ENCODE measurements at regions of chr4 and their contacts with region 1.

Region 1: GRCh38 chr4:169612871-169613859 is 782 bp upstream of the NEK1 start:
- DNase-seq: peak; percentile 51 to 88 (median 77)
- ATAC-seq: peak; percentile 43
- H3K4me3 ChIP-seq: peak overlapping the region; percentile 70 to 95
- H3K4me3 Mint-ChIP-seq: peak overlapping the region; percentile 97
- H3K27ac ChIP-seq: peak overlapping the region; percentile 97 to 100
- H3K27ac Mint-ChIP-seq: peak overlapping the region; percentile 99
- H3K4me1 ChIP-seq: peaks cover 22% of the 10 kb centered on the region
- H3K4me1 Mint-ChIP-seq: peaks cover 48% of the 10 kb centered on the region
- H3K27me3 ChIP-seq: no peaks in the 10 kb centered on the region
- H3K27me3 Mint-ChIP-seq: no peaks in the 10 kb centered on the region
- CTCF ChIP-seq: peak; percentile 77

Region 2: GRCh38 chr4:168480931-168481611 is 1132.1 kb before region 1 on chr4:
- CTCF ChIA-PET with region 1: no interaction called
- POLR2A ChIA-PET with region 1: no interaction called
- intact Hi-C with region 1: loop called in 1 of 2 experiments (anchors 5 kb)
- DNase-seq: peak in 8 of 9 experiments; percentile 16 to 89 (median 56)
- ATAC-seq: peak; percentile 67
- H3K4me3 ChIP-seq: peak overlapping the region; percentile 56 to 93
- H3K4me3 Mint-ChIP-seq: peak overlapping the region; percentile 99
- H3K27ac ChIP-seq: peak overlapping the region; percentile 82 to 96
- H3K27ac Mint-ChIP-seq: peak overlapping the region; percentile 97
- H3K4me1 ChIP-seq: peaks cover 42% of the 10 kb centered on the region
- H3K4me1 Mint-ChIP-seq: peaks cover 66% of the 10 kb centered on the region
- H3K27me3 ChIP-seq: no peaks in the 10 kb centered on the region
- H3K27me3 Mint-ChIP-seq: no peaks in the 10 kb centered on the region
- CTCF ChIP-seq: no peak

Region 3: DNA sequence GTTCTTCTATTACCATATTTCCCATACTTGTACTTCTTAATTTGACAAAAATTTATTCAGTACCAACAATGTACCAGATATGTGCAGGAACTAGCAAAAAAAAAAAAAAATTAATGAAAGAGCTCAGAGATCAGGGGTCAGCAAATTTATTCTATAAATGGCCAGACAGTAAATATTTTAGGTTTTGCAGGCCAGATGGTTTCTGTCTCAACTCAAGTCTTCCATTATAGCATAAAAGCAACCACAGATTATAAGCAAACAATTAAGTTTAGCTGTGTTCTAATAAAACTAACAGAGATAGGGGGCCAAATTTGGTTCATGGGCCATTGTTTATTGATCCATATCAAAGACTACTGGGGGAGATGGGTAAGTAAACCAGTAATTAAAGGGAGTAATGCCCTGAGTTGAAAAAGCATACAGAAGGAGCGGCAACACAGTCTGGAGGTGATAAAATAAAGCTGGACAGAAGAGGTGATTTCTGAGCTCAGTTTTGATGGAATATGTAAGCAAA is 20.1 kb before region 1 on chr4:
- CTCF ChIA-PET with region 1: no interaction called
- POLR2A ChIA-PET with region 1: no interaction called
- intact Hi-C with region 1: no loop called
- DNase-seq: no peak
- ATAC-seq: no peak
- H3K4me3 ChIP-seq: no peak overlapping the region
- H3K4me3 Mint-ChIP-seq: no peak overlapping the region
- H3K27ac ChIP-seq: no peak overlapping the region
- H3K27ac Mint-ChIP-seq: no peak overlapping the region
- H3K4me1 ChIP-seq: no peaks in the 10 kb centered on the region
- H3K4me1 Mint-ChIP-seq: no peaks in the 10 kb centered on the region
- H3K27me3 ChIP-seq: no peaks in the 10 kb centered on the region
- H3K27me3 Mint-ChIP-seq: no peaks in the 10 kb centered on the region
- CTCF ChIP-seq: no peak

Region 4: DNA sequence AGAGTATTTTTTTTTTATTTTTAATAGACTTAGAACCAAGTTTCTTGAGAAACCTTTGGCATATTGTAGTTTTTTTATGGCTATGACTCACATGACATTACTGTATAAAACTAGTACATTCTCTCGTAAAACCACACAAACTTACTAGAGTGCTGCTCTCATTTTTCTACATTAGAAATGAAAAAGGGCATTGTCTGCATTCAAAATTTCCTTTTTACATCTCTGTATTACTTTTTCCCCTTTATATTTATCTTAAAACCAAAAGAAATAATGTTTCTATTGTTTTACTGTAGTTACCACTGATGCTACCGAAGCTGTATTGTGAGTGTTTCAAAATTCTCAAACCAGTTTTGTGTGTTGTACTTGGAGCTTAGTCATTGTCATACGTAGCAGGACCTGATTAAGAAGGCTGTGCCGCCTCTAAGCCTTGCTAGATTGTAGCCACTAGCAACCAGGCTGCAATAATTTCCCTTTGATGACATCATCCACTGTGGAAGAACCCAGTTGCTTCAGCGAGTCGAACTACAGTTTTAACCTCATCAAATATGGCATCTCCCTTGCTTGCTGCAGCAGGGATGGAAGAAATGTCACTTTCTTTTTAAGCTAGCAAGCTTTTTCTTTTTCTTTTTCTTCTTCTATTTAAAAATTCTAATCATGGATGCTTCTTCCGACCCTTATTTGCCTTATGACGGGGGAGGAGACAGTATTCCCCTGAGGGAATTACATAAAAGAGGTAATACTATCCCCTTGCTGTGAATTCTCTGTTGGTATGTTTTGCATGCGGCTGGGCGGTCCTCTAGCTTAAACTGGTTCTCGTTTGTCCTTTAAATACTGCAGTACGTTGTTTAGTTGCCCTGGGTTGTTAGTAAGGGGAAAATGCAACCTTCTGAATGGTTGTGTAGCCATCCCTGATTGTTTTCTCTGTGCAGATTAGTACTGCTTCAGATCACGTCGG is 46.8 kb after region 1 on chr4:
- CTCF ChIA-PET with region 1: interaction called, 15 read pairs
- POLR2A ChIA-PET with region 1: interaction called, 3 read pairs
- intact Hi-C with region 1: loop called (anchors 1 kb)
- DNase-seq: peak; percentile 29 to 91 (median 62)
- ATAC-seq: peak; percentile 96
- H3K4me3 ChIP-seq: peak overlapping the region; percentile 13 to 16
- H3K4me3 Mint-ChIP-seq: peak overlapping the region; percentile 80
- H3K27ac ChIP-seq: peak overlapping the region; percentile 13 to 45
- H3K27ac Mint-ChIP-seq: peak overlapping the region; percentile 88
- H3K4me1 ChIP-seq: peaks cover 23% of the 10 kb centered on the region
- H3K4me1 Mint-ChIP-seq: peaks cover 45% of the 10 kb centered on the region
- H3K27me3 ChIP-seq: no peaks in the 10 kb centered on the region
- H3K27me3 Mint-ChIP-seq: no peaks in the 10 kb centered on the region
- CTCF ChIP-seq: no peak

Region 5: DNA sequence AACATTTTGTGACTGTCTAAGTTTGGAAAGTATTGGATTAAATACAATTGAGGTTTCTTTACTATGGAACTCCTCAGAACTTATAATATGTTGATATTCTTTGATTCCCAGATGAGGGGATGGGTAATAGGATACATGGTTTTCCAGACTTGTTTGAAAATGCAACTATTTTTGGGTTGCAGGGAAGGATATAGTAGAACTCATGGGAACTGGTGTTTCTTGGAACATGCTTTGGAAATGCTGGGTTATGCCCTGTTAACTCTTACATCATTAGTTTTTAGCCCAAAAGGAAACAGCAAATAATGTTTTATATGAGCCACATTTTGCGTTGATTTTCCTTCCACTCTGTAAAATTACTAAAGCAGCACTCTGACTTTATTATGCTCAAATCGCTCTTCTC is 102.7 kb after region 1 on chr4:
- CTCF ChIA-PET with region 1: interaction called, 7 read pairs
- POLR2A ChIA-PET with region 1: no interaction called
- intact Hi-C with region 1: loop called in 1 of 2 experiments (anchors 2 kb)
- DNase-seq: no peak
- ATAC-seq: no peak
- H3K4me3 ChIP-seq: no peak overlapping the region
- H3K4me3 Mint-ChIP-seq: no peak overlapping the region
- H3K27ac ChIP-seq: no peak overlapping the region
- H3K27ac Mint-ChIP-seq: no peak overlapping the region
- H3K4me1 ChIP-seq: no peaks in the 10 kb centered on the region
- H3K4me1 Mint-ChIP-seq: peaks cover 2% of the 10 kb centered on the region
- H3K27me3 ChIP-seq: no peaks in the 10 kb centered on the region
- H3K27me3 Mint-ChIP-seq: no peaks in the 10 kb centered on the region
- CTCF ChIP-seq: no peak

Region 6: DNA sequence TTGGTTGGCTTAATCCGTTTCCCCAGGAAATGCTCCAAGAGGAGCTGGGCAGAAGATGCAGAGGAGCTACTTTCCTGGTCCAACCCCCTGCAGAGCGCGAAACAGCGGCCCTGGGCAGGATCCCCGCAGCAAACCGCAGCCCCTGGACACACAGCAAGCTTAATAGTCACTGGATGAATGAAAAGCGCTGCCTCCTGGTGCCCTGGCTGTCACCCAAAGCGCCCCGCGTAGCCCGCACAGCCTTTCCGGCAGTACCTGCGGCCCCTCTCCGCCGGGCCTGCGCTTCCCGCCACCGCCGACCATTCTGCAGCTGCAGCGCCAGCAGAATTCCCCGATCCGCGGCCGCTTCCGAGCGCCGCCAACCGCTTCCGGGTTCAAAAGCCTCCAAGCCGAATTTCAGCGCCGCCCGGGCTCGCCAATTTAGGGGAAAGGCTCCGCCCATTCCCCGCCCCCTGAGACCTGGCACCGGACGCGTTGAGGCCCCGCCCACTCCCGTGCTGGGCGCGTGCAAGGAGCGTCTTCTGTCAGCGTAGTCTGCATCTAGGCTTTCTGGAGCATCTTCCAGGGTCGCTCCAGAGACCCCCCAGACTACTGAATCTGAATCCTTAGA is 144.5 kb after region 1 on chr4 and contains the start of gene HPF1:
- CTCF ChIA-PET with region 1: no interaction called
- POLR2A ChIA-PET with region 1: no interaction called
- intact Hi-C with region 1: loop called (anchors 1 kb)
- DNase-seq: peak; percentile 82 to 97 (median 95)
- ATAC-seq: peak; percentile 98
- H3K4me3 ChIP-seq: peak within 1 kb of the TSS; percentile 62 to 97
- H3K4me3 Mint-ChIP-seq: peak within 1 kb of the TSS; percentile 82
- H3K27ac ChIP-seq: peak within 1 kb of the TSS; percentile 31 to 63
- H3K27ac Mint-ChIP-seq: peak within 1 kb of the TSS; percentile 64
- H3K4me1 ChIP-seq: peaks cover 14% of the 10 kb centered on the region
- H3K4me1 Mint-ChIP-seq: peaks cover 34% of the 10 kb centered on the region
- H3K27me3 ChIP-seq: no peaks in the 10 kb centered on the region
- H3K27me3 Mint-ChIP-seq: no peaks in the 10 kb centered on the region
- CTCF ChIP-seq: no peak
- total RNA-seq, gene HPF1: 3.1 to 4.2 TPM

Region 7: DNA sequence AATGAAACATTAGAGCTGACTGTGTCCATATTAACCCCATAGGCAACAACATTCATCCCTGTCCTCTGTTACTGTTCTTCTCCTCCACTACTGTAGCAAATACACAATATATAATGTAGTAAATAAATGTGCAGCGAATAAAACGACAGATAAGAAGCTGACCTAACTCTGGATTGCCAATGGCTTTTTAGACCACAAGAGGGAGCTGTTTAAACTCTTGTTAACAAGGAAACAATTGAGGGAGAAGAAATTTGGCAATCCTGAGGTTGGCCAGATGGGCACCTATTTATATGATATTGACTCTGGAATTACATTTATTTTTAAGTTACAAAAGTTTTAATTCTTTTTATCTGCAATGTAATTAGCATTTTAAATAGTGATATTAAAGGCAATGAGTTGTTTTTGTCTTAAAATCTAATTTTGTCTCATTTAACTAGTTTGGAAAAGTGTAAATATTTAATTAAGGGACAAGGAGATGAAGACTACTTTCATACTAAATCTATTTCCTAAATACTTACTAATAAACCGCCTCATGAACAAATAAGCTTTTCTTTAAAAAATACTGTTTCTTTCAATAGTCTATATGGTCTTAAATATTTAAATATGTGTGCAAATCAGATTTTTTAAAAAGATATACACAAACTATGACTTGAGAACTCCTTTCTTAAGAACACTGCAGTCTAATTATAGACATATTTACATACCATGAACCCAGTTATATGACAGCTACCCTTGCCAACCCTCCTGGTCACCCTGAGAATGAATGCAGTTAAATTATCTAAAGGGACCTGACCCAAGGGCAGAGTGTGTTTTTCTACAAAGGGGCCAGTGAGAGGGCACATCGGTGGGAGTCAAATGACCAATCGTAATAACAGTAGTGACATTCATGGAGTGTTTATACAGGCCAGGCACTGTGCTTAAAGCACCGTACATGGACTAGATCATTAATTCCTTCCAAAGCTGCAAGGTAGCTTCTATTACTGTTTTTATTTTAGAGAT is 197.5 kb after region 1 on chr4:
- CTCF ChIA-PET with region 1: interaction called, 12 read pairs
- POLR2A ChIA-PET with region 1: interaction called, 4 read pairs
- intact Hi-C with region 1: loop called in 1 of 2 experiments (anchors 1 kb)
- DNase-seq: peak in 3 of 9 experiments; percentile 18 to 68 (median 61)
- ATAC-seq: no peak
- H3K4me3 ChIP-seq: no peak overlapping the region
- H3K4me3 Mint-ChIP-seq: no peak overlapping the region
- H3K27ac ChIP-seq: no peak overlapping the region
- H3K27ac Mint-ChIP-seq: no peak overlapping the region
- H3K4me1 ChIP-seq: no peaks in the 10 kb centered on the region
- H3K4me1 Mint-ChIP-seq: no peaks in the 10 kb centered on the region
- H3K27me3 ChIP-seq: no peaks in the 10 kb centered on the region
- H3K27me3 Mint-ChIP-seq: peaks cover 6% of the 10 kb centered on the region
- CTCF ChIP-seq: peak; percentile 79

Region 8: GRCh38 chr4:170015285-170015684 is 402.1 kb after region 1 on chr4:
- CTCF ChIA-PET with region 1: no interaction called
- POLR2A ChIA-PET with region 1: no interaction called
- intact Hi-C with region 1: no loop called
- DNase-seq: no peak
- ATAC-seq: no peak
- H3K4me3 ChIP-seq: no peak overlapping the region
- H3K4me3 Mint-ChIP-seq: no peak overlapping the region
- H3K27ac ChIP-seq: no peak overlapping the region
- H3K27ac Mint-ChIP-seq: no peak overlapping the region
- H3K4me1 ChIP-seq: no peaks in the 10 kb centered on the region
- H3K4me1 Mint-ChIP-seq: no peaks in the 10 kb centered on the region
- H3K27me3 ChIP-seq: no peaks in the 10 kb centered on the region
- H3K27me3 Mint-ChIP-seq: peaks cover 5% of the 10 kb centered on the region
- CTCF ChIP-seq: no peak

Region 9: GRCh38 chr4:170047771-170048354 is 434.7 kb after region 1 on chr4:
- CTCF ChIA-PET with region 1: interaction called, 4 read pairs
- POLR2A ChIA-PET with region 1: no interaction called
- intact Hi-C with region 1: loop called in 1 of 2 experiments (anchors 2 kb)
- DNase-seq: peak in 8 of 9 experiments; percentile 16 to 74 (median 58)
- ATAC-seq: no peak
- H3K4me3 ChIP-seq: no peak overlapping the region
- H3K4me3 Mint-ChIP-seq: no peak overlapping the region
- H3K27ac ChIP-seq: no peak overlapping the region
- H3K27ac Mint-ChIP-seq: no peak overlapping the region
- H3K4me1 ChIP-seq: no peaks in the 10 kb centered on the region
- H3K4me1 Mint-ChIP-seq: no peaks in the 10 kb centered on the region
- H3K27me3 ChIP-seq: no peaks in the 10 kb centered on the region
- H3K27me3 Mint-ChIP-seq: peaks cover 3% of the 10 kb centered on the region
- CTCF ChIP-seq: peak; percentile 88

Measured in CD8-positive, alpha-beta T cell (primary cell).